ENCODE measurements at regions of chr13 and their contacts with region 1.

Region 1: GRCh38 chr13:102596147-102597028 is at the start of gene TPP2:
- DNase-seq: peak; percentile 98 to 99 (median 99)
- H3K4me3 ChIP-seq: peak within 1 kb of the TSS; percentile 87 to 98 (median 94)
- H3K27ac ChIP-seq: peak within 1 kb of the TSS; percentile 98 to 99
- H3K4me1 ChIP-seq: peaks cover 39 to 62% (median 48%) of the 10 kb centered on the region in 4 experiments
- H3K27me3 ChIP-seq: no peaks in the 10 kb centered on the region

Region 2: GRCh38 chr13:102580552-102581169 is 15.7 kb before region 1 on chr13:
- CTCF ChIA-PET with region 1: interaction called, 34 read pairs
- POLR2A ChIA-PET with region 1: interaction called, 4 read pairs
- DNase-seq: peak; percentile 76 to 85 (median 76)
- H3K4me3 ChIP-seq: no peak overlapping the region
- H3K27ac ChIP-seq: no peak overlapping the region
- H3K4me1 ChIP-seq: peaks cover 0 to 10% (median 7%) of the 10 kb centered on the region in 4 experiments
- H3K27me3 ChIP-seq: no peaks in the 10 kb centered on the region

Region 3: GRCh38 chr13:102609696-102610095 is 13.3 kb after region 1 on chr13:
- CTCF ChIA-PET with region 1: interaction called, 10 read pairs
- POLR2A ChIA-PET with region 1: interaction called, 22 read pairs
- DNase-seq: no peak
- H3K4me3 ChIP-seq: no peak overlapping the region
- H3K27ac ChIP-seq: no peak overlapping the region
- H3K4me1 ChIP-seq: peaks cover 0 to 15% (median 4%) of the 10 kb centered on the region in 4 experiments
- H3K27me3 ChIP-seq: no peaks in the 10 kb centered on the region

Region 4: DNA sequence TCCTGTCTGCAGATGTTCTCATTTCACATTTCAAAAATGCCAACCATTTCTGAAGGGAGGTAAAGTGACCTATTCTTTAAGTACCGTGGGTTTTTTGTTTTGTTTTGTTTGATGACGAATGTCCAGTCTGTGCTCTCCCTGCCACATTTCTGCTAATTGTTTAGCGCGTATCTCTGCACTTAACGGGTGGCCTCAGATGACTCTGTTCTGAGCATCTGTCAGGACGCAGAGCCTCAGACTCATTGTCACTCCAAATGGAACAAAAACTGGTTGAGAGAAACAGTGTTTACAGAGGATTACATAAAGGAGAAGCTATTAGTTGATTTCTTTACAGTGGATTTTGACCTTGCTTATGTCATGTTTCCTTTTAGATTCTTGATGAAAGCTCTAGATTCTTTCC is 24.1 kb after region 1 on chr13:
- CTCF ChIA-PET with region 1: interaction called, 11 read pairs
- POLR2A ChIA-PET with region 1: no interaction called
- DNase-seq: no peak
- H3K4me3 ChIP-seq: no peak overlapping the region
- H3K27ac ChIP-seq: no peak overlapping the region
- H3K4me1 ChIP-seq: no peaks in the 10 kb centered on the region
- H3K27me3 ChIP-seq: no peaks in the 10 kb centered on the region

Region 5: GRCh38 chr13:102845630-102846260 is 249.4 kb after region 1 on chr13 and contains the start of gene ERCC5:
- CTCF ChIA-PET with region 1: interaction called, 6 read pairs
- POLR2A ChIA-PET with region 1: interaction called, 17 read pairs
- DNase-seq: peak; percentile 98 to 99 (median 99)
- H3K4me3 ChIP-seq: peak within 1 kb of the TSS; percentile 87 to 100 (median 98)
- H3K27ac ChIP-seq: peak within 1 kb of the TSS; percentile 92 to 97
- H3K4me1 ChIP-seq: peaks cover 3 to 25% (median 18%) of the 10 kb centered on the region in 4 experiments
- H3K27me3 ChIP-seq: no peaks in the 10 kb centered on the region

Region 6: DNA sequence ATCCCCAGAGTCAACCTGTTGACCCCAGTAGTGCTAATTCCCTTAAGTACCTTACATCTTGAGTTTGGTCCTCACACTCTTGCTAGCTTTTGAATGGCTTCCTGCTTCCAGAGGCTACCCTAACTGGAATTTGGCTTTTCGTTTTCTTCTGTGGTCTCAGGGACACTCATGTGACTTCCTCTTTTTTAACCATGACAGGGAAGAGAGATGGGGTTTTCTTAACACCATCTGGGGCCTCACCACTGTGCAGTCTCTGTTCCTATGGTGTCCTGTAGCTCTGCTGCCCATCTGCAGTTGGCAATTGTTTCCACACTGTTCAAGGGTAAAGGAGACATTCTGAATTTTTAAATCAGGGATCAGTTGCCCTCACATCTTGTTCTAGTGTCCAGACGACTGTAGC is 403.1 kb after region 1 on chr13:
- CTCF ChIA-PET with region 1: no interaction called
- POLR2A ChIA-PET with region 1: no interaction called
- DNase-seq: peak; percentile 0 to 76 (median 60)
- H3K4me3 ChIP-seq: no peak overlapping the region
- H3K27ac ChIP-seq: no peak overlapping the region
- H3K4me1 ChIP-seq: peaks cover 0 to 11% (median 3%) of the 10 kb centered on the region in 4 experiments
- H3K27me3 ChIP-seq: no peaks in the 10 kb centered on the region